ENCODE measurements at regions of chr14 and their contacts with region 1.

Region 1: GRCh38 chr14:54773171-54773975 is 129.3 kb downstream of the GCH1 start:
- DNase-seq: peak; percentile 77
- H3K4me3 Mint-ChIP-seq: peak overlapping the region; percentile 35
- H3K27ac Mint-ChIP-seq: peak overlapping the region; percentile 76
- H3K4me1 Mint-ChIP-seq: peaks cover 51% of the 10 kb centered on the region
- H3K27me3 Mint-ChIP-seq: peaks cover 32% of the 10 kb centered on the region

Region 2: DNA sequence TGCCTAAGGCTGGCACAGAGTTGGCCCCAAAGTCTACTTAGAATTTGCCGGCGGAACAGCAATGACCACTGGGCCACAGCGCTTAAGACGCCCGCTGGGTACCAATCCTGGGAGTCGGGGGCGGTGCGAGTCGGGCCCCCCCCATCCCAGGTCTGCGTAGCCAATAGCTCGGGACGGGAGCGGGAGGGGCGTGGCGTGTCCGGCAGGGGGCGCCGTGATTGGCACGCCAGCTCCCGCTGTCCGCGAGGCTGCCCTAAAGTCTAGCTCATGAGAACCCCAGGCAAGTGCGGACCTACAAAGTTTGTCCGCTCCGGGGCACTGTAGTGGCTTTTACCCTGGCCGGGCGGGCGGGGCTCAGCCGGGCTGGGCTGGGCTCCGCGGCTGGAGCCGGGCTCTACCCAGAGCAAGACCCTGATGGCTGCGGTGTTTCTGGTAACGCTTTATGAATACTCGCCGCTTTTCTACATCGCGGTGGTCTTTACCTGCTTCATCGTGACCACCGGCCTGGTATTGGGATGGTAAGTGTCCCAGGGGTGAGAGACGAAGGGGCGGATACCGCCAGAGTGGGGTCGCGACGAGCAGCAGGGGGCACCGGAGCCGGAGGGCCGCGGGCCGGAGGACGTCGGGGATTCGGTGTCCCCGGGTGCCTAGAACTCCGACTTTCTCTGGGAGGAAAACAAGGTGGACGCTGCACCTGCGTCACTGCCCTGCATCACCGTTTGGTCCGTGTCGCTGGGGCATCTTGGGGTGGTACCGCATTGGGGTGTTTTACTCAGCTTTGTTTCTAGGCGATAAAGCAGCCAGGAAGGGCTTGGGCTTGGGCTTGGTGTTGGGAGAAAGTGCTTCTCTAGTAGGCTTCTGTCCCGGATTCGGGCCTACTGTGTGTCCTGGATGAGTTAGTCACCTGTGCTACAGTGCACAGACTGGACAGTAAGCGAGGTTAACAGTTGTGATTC is 263.5 kb before region 1 on chr14 and contains the start of gene CGRRF1:
- intact Hi-C with region 1: loop called (anchors 1 kb)
- DNase-seq: peak; percentile 94
- H3K4me3 Mint-ChIP-seq: peak within 1 kb of the TSS; percentile 88
- H3K27ac Mint-ChIP-seq: peak within 1 kb of the TSS; percentile 67
- H3K4me1 Mint-ChIP-seq: peaks cover 25% of the 10 kb centered on the region
- H3K27me3 Mint-ChIP-seq: peaks cover 6% of the 10 kb centered on the region
- total RNA-seq, gene CGRRF1: 6.2 and 9.1 TPM in 2 replicates

Region 3: DNA sequence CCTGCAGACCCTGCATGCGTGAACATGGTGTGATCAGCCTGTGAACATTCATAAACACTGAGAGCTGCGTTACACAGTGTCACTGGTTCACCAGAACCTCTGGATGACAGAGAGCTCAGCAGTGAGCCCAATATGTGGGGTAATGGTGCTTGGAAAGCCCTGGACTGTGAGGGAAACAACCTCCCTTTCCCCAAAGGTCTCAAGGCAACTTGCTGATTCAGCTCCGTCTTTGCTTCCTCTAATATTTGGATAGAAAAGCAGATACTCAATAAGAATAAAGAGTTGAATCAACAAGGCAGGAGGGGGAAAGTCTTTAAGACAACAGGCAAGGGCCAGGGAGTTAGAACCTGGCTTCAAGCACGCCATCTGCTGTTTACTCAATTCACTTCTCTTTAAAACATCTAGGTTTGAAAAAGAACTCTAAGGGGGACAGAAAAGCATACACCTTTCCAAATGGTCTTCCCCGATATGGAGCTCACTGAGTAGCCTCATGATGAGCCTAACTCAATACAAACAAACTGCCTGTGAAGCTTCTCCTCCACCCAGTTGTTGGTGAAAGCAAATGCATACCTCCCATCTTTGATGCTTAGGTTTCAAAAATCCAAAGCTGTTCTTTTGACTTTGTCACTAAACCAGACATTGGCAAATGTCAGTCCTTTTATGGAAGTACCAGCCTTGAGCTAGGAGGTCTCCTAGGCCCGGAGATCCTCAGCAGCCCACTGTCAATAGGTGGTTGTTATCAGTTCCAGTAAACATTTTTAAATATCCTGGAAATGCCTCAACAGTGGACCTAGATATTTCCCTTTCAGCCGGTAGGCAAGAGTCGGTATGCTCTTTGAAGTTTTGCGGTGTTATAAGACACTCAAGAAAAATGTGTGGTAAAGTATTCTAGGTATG is 130.3 kb before region 1 on chr14:
- intact Hi-C with region 1: loop called (anchors 2 kb)
- DNase-seq: no peak
- H3K4me3 Mint-ChIP-seq: no peak overlapping the region
- H3K27ac Mint-ChIP-seq: no peak overlapping the region
- H3K4me1 Mint-ChIP-seq: peaks cover 13% of the 10 kb centered on the region
- H3K27me3 Mint-ChIP-seq: peaks cover 19% of the 10 kb centered on the region

Region 4: DNA sequence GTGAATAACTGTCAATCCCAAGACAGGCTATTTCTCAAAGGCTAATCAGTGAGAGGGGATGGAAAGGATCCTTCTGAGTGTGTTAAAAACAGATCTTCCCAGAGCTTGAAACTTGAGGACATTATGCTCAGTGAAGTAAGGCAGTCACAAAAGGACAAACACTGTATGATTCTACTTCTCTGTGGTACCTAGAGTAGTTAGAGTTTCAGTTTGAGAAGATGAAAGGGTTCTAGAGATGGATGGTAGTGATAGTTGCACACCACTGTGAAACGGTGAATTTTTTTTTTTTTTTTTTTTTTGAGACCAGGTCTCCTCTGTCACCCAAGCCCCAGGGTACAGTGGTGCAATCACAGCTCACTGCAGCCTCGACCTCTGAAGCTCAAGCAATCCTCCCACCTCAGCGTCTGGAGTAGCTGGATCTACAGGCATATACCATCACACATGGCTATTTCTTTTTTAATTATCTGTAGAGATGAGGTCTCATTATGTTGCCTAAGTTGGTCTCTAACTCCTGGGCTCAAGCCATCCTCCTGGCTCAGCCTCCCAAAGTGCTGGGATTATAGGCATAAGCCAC is 72.6 kb before region 1 on chr14:
- intact Hi-C with region 1: loop called (anchors 2 kb)
- DNase-seq: no peak
- H3K4me3 Mint-ChIP-seq: no peak overlapping the region
- H3K27ac Mint-ChIP-seq: no peak overlapping the region
- H3K4me1 Mint-ChIP-seq: peaks cover 14% of the 10 kb centered on the region
- H3K27me3 Mint-ChIP-seq: peaks cover 46% of the 10 kb centered on the region

Region 5: GRCh38 chr14:54737132-54737711 is 36.2 kb before region 1 on chr14:
- intact Hi-C with region 1: loop called (anchors 1 kb)
- DNase-seq: no peak
- H3K4me3 Mint-ChIP-seq: peak overlapping the region; percentile 14
- H3K27ac Mint-ChIP-seq: peak overlapping the region; percentile 77
- H3K4me1 Mint-ChIP-seq: peaks cover 58% of the 10 kb centered on the region
- H3K27me3 Mint-ChIP-seq: no peaks in the 10 kb centered on the region

Region 6: GRCh38 chr14:54805521-54806322 is 32.3 kb after region 1 on chr14:
- intact Hi-C with region 1: loop called (anchors 1 kb)
- DNase-seq: peak; percentile 56
- H3K4me3 Mint-ChIP-seq: no peak overlapping the region
- H3K27ac Mint-ChIP-seq: no peak overlapping the region
- H3K4me1 Mint-ChIP-seq: peaks cover 2% of the 10 kb centered on the region
- H3K27me3 Mint-ChIP-seq: peaks cover 34% of the 10 kb centered on the region

Region 7: GRCh38 chr14:55129428-55130195 is 356.2 kb after region 1 on chr14:
- intact Hi-C with region 1: no loop called
- DNase-seq: peak; percentile 28
- H3K4me3 Mint-ChIP-seq: peak overlapping the region; percentile 75
- H3K27ac Mint-ChIP-seq: peak overlapping the region; percentile 52
- H3K4me1 Mint-ChIP-seq: peaks cover 33% of the 10 kb centered on the region
- H3K27me3 Mint-ChIP-seq: peaks cover 17% of the 10 kb centered on the region